ENCODE measurements at regions of chr22 and their contacts with region 1.

Region 1: DNA sequence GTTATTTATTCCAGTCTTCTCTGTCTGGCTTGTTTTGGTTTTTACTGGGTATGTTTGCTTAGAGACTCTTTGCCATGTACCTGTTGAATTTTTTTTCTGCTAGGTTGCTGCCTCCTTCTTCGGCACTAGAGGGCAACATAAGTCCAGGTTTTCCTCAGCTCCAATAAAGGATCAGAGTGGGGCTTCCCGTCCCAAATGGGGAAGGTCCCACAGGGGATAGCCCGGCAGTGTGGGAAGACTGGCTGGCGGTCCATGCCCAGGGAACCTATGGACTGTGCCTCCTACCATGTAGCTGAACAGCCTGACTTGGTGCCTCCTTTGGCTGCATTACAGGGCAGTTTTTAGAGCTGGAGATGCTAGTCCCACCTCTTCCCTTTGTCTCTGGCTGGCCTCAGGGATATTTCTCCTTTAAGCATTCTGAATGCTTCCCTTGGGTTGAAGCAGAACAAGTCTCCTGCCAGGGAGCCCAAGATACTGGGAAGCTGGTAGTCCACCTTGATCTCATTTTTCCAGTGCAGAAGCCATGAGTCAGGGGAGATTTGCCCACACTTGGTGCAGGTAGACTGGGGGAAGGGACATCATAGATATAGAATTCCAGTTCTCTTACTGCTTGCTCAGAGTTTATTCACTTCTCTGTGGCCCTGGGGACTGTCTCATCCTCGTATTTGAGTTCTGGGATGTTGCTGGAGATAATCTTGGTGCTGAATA is 60.2 kb downstream of the BRD1 start:
- DNase-seq: peak; percentile 47
- H3K4me3 Mint-ChIP-seq: no peak overlapping the region
- H3K27ac Mint-ChIP-seq: peak overlapping the region; percentile 17
- H3K4me1 Mint-ChIP-seq: peaks cover 15% of the 10 kb centered on the region
- H3K27me3 Mint-ChIP-seq: peaks cover 3% of the 10 kb centered on the region

Region 2: GRCh38 chr22:49693416-49693815 is 74.1 kb before region 1 on chr22:
- CTCF ChIA-PET with region 1: no interaction called
- DNase-seq: no peak
- H3K4me3 Mint-ChIP-seq: no peak overlapping the region
- H3K27ac Mint-ChIP-seq: no peak overlapping the region
- H3K4me1 Mint-ChIP-seq: peaks cover 5% of the 10 kb centered on the region
- H3K27me3 Mint-ChIP-seq: peaks cover 21% of the 10 kb centered on the region

Region 3: DNA sequence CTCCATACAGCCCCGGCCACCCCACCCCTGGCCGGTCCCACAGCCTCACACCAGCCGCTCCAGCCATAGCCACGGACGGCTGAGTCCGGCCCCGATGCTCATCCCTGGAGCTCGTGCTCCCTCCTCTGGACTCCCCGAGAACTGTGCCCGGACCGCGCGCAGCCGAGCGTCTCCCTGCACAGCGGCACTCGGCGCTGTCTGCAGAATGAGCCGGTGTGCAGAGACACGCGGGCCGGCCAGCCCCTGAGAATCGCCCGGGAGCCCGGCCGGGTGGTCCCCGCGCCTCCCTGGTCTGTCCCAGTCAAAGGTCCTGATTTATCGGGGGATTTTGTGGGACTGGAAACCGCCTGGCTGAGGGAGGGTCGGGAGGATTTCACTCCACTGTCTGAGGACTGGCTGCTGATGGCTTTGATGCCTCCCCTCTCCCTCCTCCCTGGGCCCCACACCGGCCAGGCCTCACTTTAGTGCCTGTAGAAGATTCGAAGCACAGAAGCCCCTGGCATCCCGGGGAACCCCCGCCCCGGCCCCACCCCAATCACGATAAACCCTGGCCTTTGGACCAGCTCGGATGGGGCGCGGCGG is 42.5 kb before region 1 on chr22:
- CTCF ChIA-PET with region 1: no interaction called
- DNase-seq: peak; percentile 81
- H3K4me3 Mint-ChIP-seq: peak overlapping the region; percentile 69
- H3K27ac Mint-ChIP-seq: no peak overlapping the region
- H3K4me1 Mint-ChIP-seq: peaks cover 24% of the 10 kb centered on the region
- H3K27me3 Mint-ChIP-seq: peaks cover 87% of the 10 kb centered on the region

Region 4: DNA sequence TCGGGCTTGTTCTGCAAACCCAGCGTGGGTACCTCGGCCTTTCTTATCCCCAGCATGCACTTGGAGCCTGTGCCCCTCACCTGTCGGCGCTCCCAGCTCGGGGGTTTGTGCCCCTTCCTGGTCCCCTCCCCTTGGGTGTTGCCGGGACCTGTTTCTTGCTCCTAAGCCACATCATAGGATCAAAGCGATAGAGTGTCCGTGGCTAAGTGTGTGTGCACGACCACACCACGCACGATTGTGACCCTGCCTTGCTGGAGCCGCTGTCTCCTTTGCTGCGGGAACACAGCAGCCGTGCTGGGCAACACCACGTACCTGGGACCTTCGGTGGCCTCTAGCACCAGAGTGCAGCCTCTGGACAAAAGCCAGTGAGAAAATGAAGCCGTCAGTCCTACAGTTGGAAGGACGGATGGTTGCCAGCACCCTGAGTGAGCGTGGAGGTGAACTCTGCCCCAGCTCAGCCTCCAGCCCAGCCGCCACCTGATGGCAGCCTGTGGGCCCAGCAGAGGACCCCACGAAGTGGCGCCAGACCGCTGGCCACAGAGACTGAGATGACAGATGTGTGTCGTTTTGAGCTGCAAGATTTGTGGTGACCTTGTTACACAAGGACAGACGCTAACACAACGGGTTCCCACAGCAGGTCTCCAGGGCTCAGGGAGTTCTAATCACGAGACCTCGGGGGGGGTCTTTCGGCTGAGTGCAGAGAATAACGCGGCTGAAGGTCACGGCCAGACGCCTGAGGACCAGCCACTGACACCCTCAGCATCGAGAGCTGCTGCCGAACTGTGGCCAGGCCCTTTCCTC is 15.0 kb before region 1 on chr22:
- CTCF ChIA-PET with region 1: no interaction called
- DNase-seq: no peak
- H3K4me3 Mint-ChIP-seq: no peak overlapping the region
- H3K27ac Mint-ChIP-seq: no peak overlapping the region
- H3K4me1 Mint-ChIP-seq: no peaks in the 10 kb centered on the region
- H3K27me3 Mint-ChIP-seq: peaks cover 20% of the 10 kb centered on the region

Region 5: GRCh38 chr22:49838771-49839717 is 71.5 kb after region 1 on chr22:
- CTCF ChIA-PET with region 1: no interaction called
- DNase-seq: peak; percentile 92
- H3K4me3 Mint-ChIP-seq: peak overlapping the region; percentile 68
- H3K27ac Mint-ChIP-seq: peak overlapping the region; percentile 87
- H3K4me1 Mint-ChIP-seq: peaks cover 35% of the 10 kb centered on the region
- H3K27me3 Mint-ChIP-seq: peaks cover 39% of the 10 kb centered on the region

Region 6: GRCh38 chr22:49917974-49918910 is 150.7 kb after region 1 on chr22 and contains the starts of genes ALG12 and CRELD2:
- CTCF ChIA-PET with region 1: interaction called, 14 read pairs
- DNase-seq: peak; percentile 98
- H3K4me3 Mint-ChIP-seq: peak within 1 kb of the TSS; percentile 77
- H3K27ac Mint-ChIP-seq: peak within 1 kb of the TSS; percentile 88
- H3K4me1 Mint-ChIP-seq: peaks cover 34% of the 10 kb centered on the region
- H3K27me3 Mint-ChIP-seq: no peaks in the 10 kb centered on the region

Region 7: DNA sequence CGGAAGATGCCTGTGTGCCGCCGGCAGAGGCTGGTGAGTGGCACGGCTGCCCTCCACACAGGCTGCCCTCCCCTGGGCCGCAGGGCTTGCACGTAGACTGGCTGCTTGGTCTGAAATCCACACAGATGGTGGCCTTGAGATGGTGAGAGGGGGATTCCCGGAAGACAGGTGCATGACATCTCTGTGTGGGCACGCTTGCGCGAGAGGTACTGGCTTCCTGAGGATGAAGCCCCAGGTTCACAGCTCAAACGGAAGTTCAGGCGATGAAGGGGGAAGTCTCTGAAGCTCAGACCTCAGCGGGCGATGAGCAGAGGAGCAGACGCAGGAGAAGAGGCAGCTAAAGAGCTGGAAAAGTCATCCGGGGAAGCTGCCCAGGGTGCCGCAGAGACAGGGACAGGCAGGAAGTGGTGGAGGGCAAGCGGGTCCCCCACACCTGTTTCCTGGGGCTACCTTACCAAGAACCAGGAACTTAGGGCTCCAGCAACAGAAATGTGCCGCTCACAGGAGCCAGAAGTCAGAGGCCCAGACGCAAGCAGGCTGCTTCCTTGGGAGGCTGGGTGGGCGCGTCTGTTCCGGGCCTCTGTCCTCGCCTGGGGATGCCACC is 158.1 kb after region 1 on chr22:
- CTCF ChIA-PET with region 1: interaction called, 12 read pairs
- DNase-seq: peak; percentile 78
- H3K4me3 Mint-ChIP-seq: peak overlapping the region; percentile 71
- H3K27ac Mint-ChIP-seq: peak overlapping the region; percentile 97
- H3K4me1 Mint-ChIP-seq: peaks cover 53% of the 10 kb centered on the region
- H3K27me3 Mint-ChIP-seq: no peaks in the 10 kb centered on the region